Naive thymus-derived CD4-positive, alpha-beta T cell (primary cell): ENCODE measurements at regions of chr11 and their contacts with region 1.

Region 1: DNA sequence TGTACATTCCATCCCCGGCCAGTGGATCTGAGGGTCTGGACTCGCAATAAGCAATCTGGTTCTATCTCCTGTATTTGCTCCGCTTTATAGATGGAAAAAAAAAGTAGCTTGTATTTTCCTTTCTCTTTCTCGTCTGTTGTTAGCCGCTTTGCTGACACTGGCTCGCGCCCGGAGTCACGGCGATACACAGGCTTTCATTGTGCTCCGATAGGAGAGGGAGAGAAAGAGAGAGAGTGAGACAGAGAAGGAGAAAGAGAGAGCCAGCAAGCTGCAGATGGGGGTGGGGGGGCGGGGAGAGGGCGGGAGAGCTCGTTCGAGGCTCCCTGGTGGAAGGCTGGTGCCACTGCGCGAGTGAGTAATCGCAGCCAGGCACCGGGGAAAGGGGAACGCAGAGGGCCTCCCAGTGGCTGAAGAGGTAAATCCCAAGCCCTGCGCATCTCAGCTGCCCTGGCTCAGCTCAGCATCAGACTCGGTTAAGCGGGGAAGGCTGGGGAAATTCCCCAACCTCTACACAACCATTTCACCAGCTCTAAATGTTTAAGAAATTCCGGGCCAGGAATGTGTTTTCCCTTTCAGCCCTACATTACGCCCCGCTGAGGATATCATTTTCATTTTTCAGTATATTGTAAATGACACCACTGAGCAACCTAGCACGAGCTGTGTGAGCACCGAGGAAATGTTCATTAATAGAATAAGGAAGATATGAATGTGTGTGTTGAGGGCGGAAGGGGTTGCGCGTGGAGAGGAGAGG is at the start of gene MAML2:
- DNase-seq: peak; percentile 67 to 91 (median 85)
- ATAC-seq: peak; percentile 93
- H3K4me3 ChIP-seq: peak within 1 kb of the TSS; percentile 95
- H3K4me3 Mint-ChIP-seq: peak within 1 kb of the TSS; percentile 95 to 99 (median 98)
- H3K27ac ChIP-seq: peak within 1 kb of the TSS; percentile 87
- H3K27ac Mint-ChIP-seq: peak within 1 kb of the TSS; percentile 93 to 98 (median 96)
- H3K4me1 ChIP-seq: peaks cover 11 to 31% of the 10 kb centered on the region in 2 donors
- H3K4me1 Mint-ChIP-seq: peaks cover 13 to 41% (median 19%) of the 10 kb centered on the region in 7 donors
- H3K27me3 ChIP-seq: no peaks in the 10 kb centered on the region
- H3K27me3 Mint-ChIP-seq: no peaks in the 10 kb centered on the region
- total RNA-seq, gene MAML2: 15.6 to 81.3 (median 68.2) TPM

Region 2: GRCh38 chr11:95150946-95151684 is 1192.0 kb before region 1 on chr11:
- CTCF ChIA-PET with region 1: interaction called, 3 read pairs
- POLR2A ChIA-PET with region 1: no interaction called
- intact Hi-C with region 1: loop called (anchors 1 to 5 kb)
- DNase-seq: peak; percentile 74 to 93 (median 90)
- ATAC-seq: peak; percentile 97
- H3K4me3 ChIP-seq: peak overlapping the region; percentile 91
- H3K4me3 Mint-ChIP-seq: peak overlapping the region; percentile 81 to 92 (median 88)
- H3K27ac ChIP-seq: peak overlapping the region; percentile 75
- H3K27ac Mint-ChIP-seq: peak overlapping the region; percentile 92 to 99 (median 96)
- H3K4me1 ChIP-seq: peaks cover 19 to 22% of the 10 kb centered on the region in 2 donors
- H3K4me1 Mint-ChIP-seq: peaks cover 22 to 53% (median 32%) of the 10 kb centered on the region in 7 donors
- H3K27me3 ChIP-seq: no peaks in the 10 kb centered on the region
- H3K27me3 Mint-ChIP-seq: peaks cover 0 to 5% (median 3%) of the 10 kb centered on the region in 5 donors

Region 3: DNA sequence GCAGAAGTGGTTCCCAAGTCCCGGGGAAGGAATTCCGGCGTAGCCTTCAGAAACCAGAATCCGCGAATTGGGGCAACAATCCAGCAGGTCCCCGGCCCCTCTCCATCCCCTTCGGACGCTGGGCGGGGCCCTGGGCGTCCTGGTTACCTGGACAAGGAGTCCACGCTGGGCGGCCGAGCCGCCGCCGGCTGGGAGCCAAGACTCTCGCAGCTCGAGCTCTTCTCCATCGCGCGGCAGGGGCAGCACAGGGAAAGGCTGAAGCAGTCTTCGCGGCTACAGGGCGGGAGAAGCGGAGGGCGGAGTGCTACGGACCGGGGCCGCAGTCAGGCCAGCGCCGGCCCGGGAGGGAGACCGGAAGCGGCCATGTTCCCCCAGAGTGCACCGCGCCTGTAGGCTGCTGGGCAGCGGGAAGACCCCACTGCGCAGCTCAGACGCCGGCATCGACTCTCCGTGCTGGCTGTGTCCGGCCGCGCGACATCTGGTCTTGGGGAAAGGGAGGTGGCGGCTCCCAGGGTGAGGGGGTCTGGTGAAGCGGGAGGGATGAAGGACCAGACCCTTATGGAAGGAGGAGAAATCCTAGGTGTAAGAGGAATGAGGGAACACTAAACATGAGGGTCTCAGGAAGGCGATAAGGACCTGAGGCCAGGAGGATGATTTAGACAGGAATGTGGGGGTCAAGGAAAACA is 419.3 kb before region 1 on chr11 and contains the start of gene MTMR2:
- CTCF ChIA-PET with region 1: no interaction called
- POLR2A ChIA-PET with region 1: no interaction called
- intact Hi-C with region 1: loop called (anchors 2 to 5 kb)
- DNase-seq: peak in 8 of 9 donors; percentile 16 to 70 (median 26)
- ATAC-seq: peak; percentile 87
- H3K4me3 ChIP-seq: peak within 1 kb of the TSS; percentile 91
- H3K4me3 Mint-ChIP-seq: peak within 1 kb of the TSS; percentile 85 to 98 (median 94)
- H3K27ac ChIP-seq: peak within 1 kb of the TSS; percentile 65
- H3K27ac Mint-ChIP-seq: peak within 1 kb of the TSS; percentile 80 to 96 (median 90)
- H3K4me1 ChIP-seq: peaks cover 0 to 12% of the 10 kb centered on the region in 2 donors
- H3K4me1 Mint-ChIP-seq: peaks cover 18 to 37% (median 25%) of the 10 kb centered on the region in 7 donors
- H3K27me3 ChIP-seq: no peaks in the 10 kb centered on the region
- H3K27me3 Mint-ChIP-seq: peaks cover 5 to 11% (median 8%) of the 10 kb centered on the region in 5 donors
- total RNA-seq, gene MTMR2: 9.0 to 20.8 (median 10.5) TPM

Region 4: GRCh38 chr11:96091476-96091875 is 251.7 kb before region 1 on chr11:
- CTCF ChIA-PET with region 1: interaction called, 23 read pairs
- POLR2A ChIA-PET with region 1: interaction called, 6 read pairs
- intact Hi-C with region 1: loop called (anchors 1 kb)
- DNase-seq: peak in 7 of 9 donors; percentile 10 to 46 (median 23)
- ATAC-seq: peak; percentile 88
- H3K4me3 ChIP-seq: no peak overlapping the region
- H3K4me3 Mint-ChIP-seq: peak overlapping the region in 1 of 10 donors; percentile 6
- H3K27ac ChIP-seq: no peak overlapping the region
- H3K27ac Mint-ChIP-seq: peak overlapping the region in 5 of 9 donors; percentile 56 to 81 (median 71)
- H3K4me1 ChIP-seq: peaks cover 0 to 5% of the 10 kb centered on the region in 2 donors
- H3K4me1 Mint-ChIP-seq: peaks cover 30 to 95% (median 59%) of the 10 kb centered on the region in 7 donors
- H3K27me3 ChIP-seq: no peaks in the 10 kb centered on the region
- H3K27me3 Mint-ChIP-seq: no peaks in the 10 kb centered on the region

Region 5: GRCh38 chr11:96215110-96215782 is 127.9 kb before region 1 on chr11:
- CTCF ChIA-PET with region 1: interaction called, 25 read pairs
- POLR2A ChIA-PET with region 1: interaction called, 18 read pairs
- intact Hi-C with region 1: loop called (anchors 2 kb)
- DNase-seq: peak in 7 of 9 donors; percentile 25 to 67 (median 62)
- ATAC-seq: peak; percentile 78
- H3K4me3 ChIP-seq: peak overlapping the region; percentile 47
- H3K4me3 Mint-ChIP-seq: peak overlapping the region; percentile 64 to 80 (median 75)
- H3K27ac ChIP-seq: peak overlapping the region; percentile 75
- H3K27ac Mint-ChIP-seq: peak overlapping the region; percentile 89 to 99 (median 96)
- H3K4me1 ChIP-seq: peaks cover 73 to 96% of the 10 kb centered on the region in 2 donors
- H3K4me1 Mint-ChIP-seq: peaks cover 54 to 100% (median 91%) of the 10 kb centered on the region in 7 donors
- H3K27me3 ChIP-seq: no peaks in the 10 kb centered on the region
- H3K27me3 Mint-ChIP-seq: no peaks in the 10 kb centered on the region

Region 6: GRCh38 chr11:96306933-96307775 is 36.0 kb before region 1 on chr11:
- CTCF ChIA-PET with region 1: interaction called, 14 read pairs
- POLR2A ChIA-PET with region 1: interaction called, 4 read pairs
- intact Hi-C with region 1: loop called (anchors 1 to 2 kb)
- DNase-seq: peak in 7 of 9 donors; percentile 16 to 42 (median 28)
- ATAC-seq: peak; percentile 72
- H3K4me3 ChIP-seq: no peak overlapping the region
- H3K4me3 Mint-ChIP-seq: peak overlapping the region; percentile 62 to 91 (median 80)
- H3K27ac ChIP-seq: peak overlapping the region; percentile 56
- H3K27ac Mint-ChIP-seq: peak overlapping the region; percentile 19 to 91 (median 86)
- H3K4me1 ChIP-seq: peaks cover 3 to 32% of the 10 kb centered on the region in 2 donors
- H3K4me1 Mint-ChIP-seq: peaks cover 28 to 99% (median 91%) of the 10 kb centered on the region in 7 donors
- H3K27me3 ChIP-seq: no peaks in the 10 kb centered on the region
- H3K27me3 Mint-ChIP-seq: no peaks in the 10 kb centered on the region

Region 7: DNA sequence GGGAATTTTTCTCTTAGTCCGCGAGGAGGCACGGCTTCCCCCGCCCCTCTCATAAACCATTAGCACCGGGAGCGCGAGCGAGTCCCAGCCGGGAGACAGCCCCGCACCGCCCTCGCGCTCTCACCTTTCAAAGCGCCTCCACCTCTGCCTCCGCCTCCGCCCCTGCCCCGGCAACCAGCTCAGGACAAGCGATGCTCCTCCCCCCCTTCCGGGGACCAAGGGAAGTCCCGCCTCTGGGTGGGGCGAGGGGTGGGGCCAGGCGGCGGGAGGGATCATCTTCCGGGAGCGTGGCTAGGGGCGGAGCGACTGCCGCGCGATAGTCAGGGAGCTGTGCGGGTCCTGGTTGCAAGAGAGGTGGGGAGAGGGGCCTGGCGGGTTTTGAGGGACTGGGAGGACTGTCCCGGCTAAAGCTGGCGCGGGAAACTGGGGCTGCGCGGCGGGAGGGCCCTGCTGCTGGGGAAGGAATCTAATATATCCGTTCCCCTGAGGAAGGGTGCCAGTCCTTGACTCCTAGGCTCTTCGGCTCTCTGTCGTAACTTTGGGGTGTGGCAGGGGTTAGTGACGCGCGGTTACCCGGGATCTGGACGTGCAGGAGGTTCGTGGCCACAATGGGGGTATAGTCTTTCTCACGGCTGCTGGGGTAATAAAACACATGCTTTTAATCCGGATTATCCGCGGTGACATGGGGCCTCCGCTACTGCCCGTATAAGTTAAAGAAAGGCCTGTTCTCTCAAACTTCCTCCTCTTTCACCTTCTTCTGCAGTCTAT is 46.8 kb after region 1 on chr11 and contains the starts of genes CCDC82 and JRKL:
- CTCF ChIA-PET with region 1: interaction called, 8 read pairs
- POLR2A ChIA-PET with region 1: interaction called, 13 read pairs
- intact Hi-C with region 1: loop called (anchors 1 kb)
- DNase-seq: peak; percentile 96 to 99 (median 98)
- ATAC-seq: peak; percentile 99
- H3K4me3 ChIP-seq: peak within 1 kb of the TSS; percentile 66
- H3K4me3 Mint-ChIP-seq: peak within 1 kb of the TSS; percentile 84 to 99 (median 94)
- H3K27ac ChIP-seq: peak within 1 kb of the TSS; percentile 86
- H3K27ac Mint-ChIP-seq: peak within 1 kb of the TSS; percentile 71 to 97 (median 91)
- H3K4me1 ChIP-seq: peaks cover 17 to 18% of the 10 kb centered on the region in 2 donors
- H3K4me1 Mint-ChIP-seq: peaks cover 32 to 66% (median 60%) of the 10 kb centered on the region in 7 donors
- H3K27me3 ChIP-seq: no peaks in the 10 kb centered on the region
- H3K27me3 Mint-ChIP-seq: no peaks in the 10 kb centered on the region
- total RNA-seq, gene CCDC82: 21.9 to 46.2 (median 32.0) TPM
- total RNA-seq, gene JRKL: 5.4 to 17.3 (median 10.1) TPM